KBM-7 (cell line): ENCODE measurements at regions of chr6 and their contacts with region 1.

Region 1: DNA sequence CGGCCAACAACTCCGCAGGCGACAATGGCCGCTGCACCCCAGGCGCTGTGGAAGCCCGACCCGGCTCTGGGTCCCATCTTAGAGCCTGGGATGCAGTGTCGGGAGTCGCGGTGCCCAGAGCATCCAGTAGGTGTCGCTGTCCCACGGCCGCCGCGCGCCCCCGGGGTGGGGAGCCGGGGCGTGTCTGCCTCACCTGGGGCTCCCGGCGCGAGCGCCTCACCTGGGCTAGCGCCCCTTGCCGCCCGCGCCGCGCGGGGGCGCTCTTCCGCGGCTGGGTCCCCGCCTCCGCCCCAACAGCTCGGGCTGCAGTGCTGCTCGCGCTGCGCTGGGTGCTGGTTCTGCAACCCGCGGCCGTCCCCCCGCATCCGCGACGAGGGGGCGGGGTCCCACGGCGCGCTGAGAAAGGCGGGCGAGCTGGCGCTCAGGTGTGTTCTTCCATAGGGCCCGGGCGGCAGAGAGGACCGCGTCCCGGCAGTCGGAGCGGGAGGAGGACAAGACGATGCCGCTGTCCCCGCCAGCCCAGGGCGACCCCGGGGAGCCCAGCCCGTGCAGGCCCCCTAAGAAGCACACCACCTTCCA is at the start of gene CRYBG1:
- DNase-seq: peak; percentile 69

Region 2: GRCh38 chr6:105967917-105968584 is 392.4 kb before region 1 on chr6:
- in situ Hi-C with region 1: no loop called
- DNase-seq: no peak

Region 3: DNA sequence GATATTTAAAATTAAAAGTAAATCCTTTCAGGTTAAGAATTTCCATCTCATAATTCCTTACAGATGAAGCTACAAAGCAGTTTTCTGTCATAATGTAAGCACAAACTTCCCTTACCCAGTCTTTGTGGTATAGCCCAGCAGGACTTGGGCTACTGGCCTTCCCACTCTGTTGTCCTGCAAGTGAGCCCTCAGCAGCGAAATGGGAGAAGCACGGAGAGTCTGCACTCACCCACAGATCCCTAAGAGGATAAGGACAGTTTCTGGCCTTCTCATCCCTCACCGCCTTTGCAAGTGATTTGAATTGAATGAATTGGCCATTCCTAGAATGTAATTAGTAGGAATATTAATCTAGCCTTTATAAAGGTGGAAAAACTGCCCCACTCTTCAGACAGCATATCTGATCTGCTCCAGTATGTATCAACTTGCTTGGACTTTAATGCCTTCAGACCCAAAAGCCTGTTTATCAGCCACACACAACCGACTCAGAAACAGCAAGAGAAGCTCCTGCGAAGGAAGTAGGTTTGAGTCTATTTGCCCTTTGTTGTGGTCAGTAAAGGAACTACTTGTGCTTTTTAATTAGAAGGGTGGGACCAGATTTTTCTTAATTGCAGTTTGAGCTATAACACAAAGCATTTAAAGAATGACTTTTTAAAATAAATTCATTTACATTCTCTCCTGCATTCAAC is 304.3 kb before region 1 on chr6:
- in situ Hi-C with region 1: no loop called
- DNase-seq: no peak

Region 4: GRCh38 chr6:106556368-106556960 is 196.0 kb after region 1 on chr6:
- in situ Hi-C with region 1: loop called (anchors 25 kb)
- DNase-seq: no peak

Region 5: GRCh38 chr6:106783631-106784566 is 423.4 kb after region 1 on chr6:
- in situ Hi-C with region 1: no loop called
- DNase-seq: no peak